ENCODE measurements at regions of chr17 and their contacts with region 1.

Region 1: DNA sequence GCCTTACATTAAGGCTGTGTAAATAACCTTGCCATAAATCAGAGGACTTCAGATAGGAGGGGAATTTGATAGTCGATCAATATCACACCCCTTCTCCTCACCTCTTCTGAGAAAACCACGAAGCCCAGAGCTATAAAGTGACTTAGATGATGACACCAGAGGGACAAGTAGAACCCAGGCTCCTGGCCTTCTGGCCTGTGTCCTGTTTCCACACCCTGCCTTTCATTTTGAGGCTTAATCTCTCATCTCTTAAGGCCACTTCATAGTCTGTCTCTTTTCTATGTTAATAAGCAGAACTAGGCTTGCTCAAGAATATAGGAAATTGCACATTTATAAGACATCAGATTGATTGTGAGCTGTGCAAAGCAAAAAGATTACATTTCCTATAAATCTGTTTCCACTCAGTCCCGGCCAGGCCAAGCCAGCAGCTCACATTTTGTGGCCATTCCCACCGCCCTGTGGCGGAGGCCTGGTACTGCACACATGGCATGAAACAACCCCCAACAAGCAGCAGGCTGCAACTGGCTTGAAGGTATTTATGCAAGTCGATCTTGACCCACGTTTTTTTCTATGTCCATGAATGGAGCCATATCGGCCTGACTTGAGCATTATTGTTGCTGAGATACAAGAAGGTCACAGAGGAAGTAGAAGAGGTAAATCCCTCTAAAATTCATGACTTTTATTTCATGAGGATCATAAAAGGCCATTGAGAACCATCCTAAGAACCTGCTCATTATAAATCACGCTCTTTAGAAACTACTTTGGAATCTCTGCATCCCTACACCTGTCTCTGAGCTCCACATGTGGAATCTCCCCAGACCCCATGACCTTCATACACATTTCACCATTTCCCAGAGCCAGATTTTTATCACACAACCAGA is 93.7 kb downstream of the PMP22 start:
- DNase-seq: peak; percentile 44 to 83
- H3K4me3 ChIP-seq: no peak overlapping the region
- H3K27ac ChIP-seq: no peak overlapping the region
- H3K4me1 ChIP-seq: 0 out of 7 replicates have a peak, but pooled peaks cover 0 to 3% (median 0%) of the 10 kb centered on the region in 4 experiments
- H3K27me3 ChIP-seq: no peaks in the 10 kb centered on the region
- CTCF ChIP-seq: peak; percentile 81 to 94 (median 87)
- EP300 ChIP-seq: peak in 1 of 2 experiments; percentile 39; a peak in 1 of 3 replicates
- POLR2A ChIP-seq: no peak
- RAD21 ChIP-seq: peak; percentile 88 to 90

Region 2: GRCh38 chr17:15185625-15185991 is 14.2 kb after region 1 on chr17:
- CTCF ChIA-PET with region 1: interaction called, 13 read pairs
- POLR2A ChIA-PET with region 1: no interaction called
- DNase-seq: no peak
- H3K4me3 ChIP-seq: no peak overlapping the region
- H3K27ac ChIP-seq: no peak overlapping the region
- H3K4me1 ChIP-seq: no peaks in the 10 kb centered on the region; a peak in 2 of 7 replicates
- H3K27me3 ChIP-seq: no peaks in the 10 kb centered on the region
- CTCF ChIP-seq: no peak
- EP300 ChIP-seq: no peak
- POLR2A ChIP-seq: no peak
- RAD21 ChIP-seq: no peak

Region 3: DNA sequence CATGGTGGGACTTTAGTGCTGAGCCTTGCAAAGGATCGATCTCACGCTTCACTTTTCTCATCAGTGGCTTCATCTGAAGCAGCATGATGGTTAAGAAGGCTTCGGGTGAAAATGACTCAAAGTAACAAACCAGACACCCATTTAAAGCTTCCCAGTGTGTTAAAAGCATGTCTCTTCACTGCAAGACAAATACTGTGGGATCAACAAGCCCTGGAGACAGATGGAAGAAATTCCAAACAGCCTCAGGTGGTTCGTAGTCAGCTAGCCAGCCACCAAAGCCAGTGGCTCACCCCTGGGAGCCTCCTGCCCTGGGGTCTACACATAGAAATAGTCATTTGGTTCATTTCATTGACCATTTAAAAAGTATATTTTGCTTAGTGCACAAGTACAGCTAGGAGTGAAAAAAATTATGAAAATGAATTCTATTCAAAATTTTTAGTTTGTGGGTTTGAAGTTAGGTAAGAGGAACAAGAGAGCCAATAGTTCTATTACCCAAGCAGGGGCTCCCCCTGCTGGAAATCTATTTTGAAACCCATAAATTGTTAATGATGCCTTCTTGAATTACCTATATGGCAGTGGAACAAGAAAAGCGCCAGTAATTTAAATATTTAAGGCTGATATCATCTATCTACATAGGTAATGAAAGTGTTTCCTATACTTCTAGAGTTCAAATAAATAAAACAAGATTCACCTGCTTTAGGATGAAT is 42.1 kb after region 1 on chr17:
- CTCF ChIA-PET with region 1: interaction called, 12 read pairs
- POLR2A ChIA-PET with region 1: no interaction called
- DNase-seq: no peak
- H3K4me3 ChIP-seq: no peak overlapping the region
- H3K27ac ChIP-seq: no peak overlapping the region
- H3K4me1 ChIP-seq: no peaks in the 10 kb centered on the region
- H3K27me3 ChIP-seq: no peaks in the 10 kb centered on the region
- CTCF ChIP-seq: peak in 2 of 3 experiments; percentile 36 to 42; a peak in 2 of 4 replicates
- EP300 ChIP-seq: no peak
- POLR2A ChIP-seq: no peak
- RAD21 ChIP-seq: peak; percentile 70 to 74

Measured in H1 (cell line).